Ascending aorta (tissue), 2 donors: ENCODE measurements at regions of chr2 and their contacts with region 1.

Region 1: DNA sequence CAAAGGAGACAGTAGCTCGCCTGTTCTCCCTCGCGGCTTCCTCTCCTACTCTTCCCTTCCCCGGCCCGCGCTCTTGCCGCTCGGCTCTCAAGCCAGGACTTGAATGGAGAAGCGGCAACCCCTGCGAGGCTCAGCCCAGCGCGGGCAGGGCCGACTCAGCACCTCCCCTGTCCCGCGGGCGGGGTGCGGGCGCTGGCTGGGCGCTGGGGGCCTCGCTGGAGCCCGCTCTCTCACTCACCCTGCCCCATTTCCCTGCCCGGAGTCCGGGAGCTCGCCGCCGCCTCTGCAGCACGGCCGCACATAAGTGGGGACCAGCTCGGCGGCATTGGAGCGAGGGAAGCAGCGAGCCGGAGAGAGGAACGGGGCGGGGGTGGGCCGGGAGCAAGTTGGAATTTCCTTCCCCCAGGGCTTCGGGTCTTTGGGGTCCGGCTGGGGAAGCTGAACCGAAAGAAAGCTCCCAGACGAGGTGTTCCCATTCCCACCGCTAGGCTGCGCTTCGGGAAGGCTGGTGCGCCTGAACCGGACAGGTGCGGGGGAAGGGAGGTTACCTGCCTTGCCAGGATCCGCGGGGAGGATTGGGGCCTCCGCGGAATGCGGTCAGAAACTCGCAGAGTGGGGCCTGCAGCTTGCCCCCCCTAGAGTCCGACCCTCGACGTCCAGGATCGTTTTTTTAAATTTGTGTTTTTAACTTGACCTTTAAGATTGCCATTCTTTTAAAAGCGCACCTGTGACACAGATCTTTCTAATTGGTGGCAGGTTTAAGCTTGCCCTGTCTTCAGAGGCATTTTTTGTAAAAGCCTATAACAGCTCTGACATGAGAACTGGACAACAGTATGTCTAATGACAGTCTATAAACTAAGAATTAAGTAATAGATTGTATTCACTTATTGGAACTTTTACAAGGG is at the start of gene COBLL1:
- DNase-seq: peak; percentile 16 to 85
- H3K4me3 ChIP-seq: peak within 1 kb of the TSS; percentile 69 to 98
- H3K27ac ChIP-seq: peak within 1 kb of the TSS; percentile 98 to 99
- H3K4me1 ChIP-seq: peaks cover 0 to 11% of the 10 kb centered on the region in 2 donors
- H3K27me3 ChIP-seq: no peaks in the 10 kb centered on the region
- CTCF ChIP-seq: peak; percentile 73 to 85 (median 76)
- total RNA-seq, gene COBLL1: 13.3 TPM

Region 2: DNA sequence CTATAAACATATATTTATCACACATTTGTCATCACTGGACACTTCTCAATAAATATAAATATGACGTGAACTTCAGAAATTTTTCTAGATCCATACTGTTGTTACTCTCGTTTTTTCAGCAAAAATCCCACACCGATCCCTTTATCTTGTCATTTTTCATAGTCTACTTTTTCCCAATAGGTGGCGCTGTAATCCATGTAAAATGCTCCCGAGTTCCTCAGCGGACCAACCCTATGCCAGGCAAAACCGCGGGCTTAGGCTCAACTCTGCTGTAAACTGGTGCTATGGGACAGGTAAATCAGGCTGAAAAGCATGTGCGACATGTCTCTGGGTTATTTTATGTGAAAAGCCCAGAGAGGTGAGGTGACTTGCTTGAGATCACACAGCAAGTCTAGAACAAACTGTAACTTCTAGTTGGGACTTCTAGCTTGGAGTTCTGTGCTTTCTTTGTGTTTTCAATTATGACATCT is 104.3 kb before region 1 on chr2:
- intact Hi-C with region 1: loop called (anchors 1 kb)
- DNase-seq: peak in 1 of 2 donors; percentile 76
- H3K4me3 ChIP-seq: peak overlapping the region in 1 of 2 donors; percentile 47
- H3K27ac ChIP-seq: no peak overlapping the region
- H3K4me1 ChIP-seq: peaks cover 4 to 17% of the 10 kb centered on the region in 2 donors
- H3K27me3 ChIP-seq: no peaks in the 10 kb centered on the region
- CTCF ChIP-seq: peak; percentile 63 to 81 (median 74)

Region 3: DNA sequence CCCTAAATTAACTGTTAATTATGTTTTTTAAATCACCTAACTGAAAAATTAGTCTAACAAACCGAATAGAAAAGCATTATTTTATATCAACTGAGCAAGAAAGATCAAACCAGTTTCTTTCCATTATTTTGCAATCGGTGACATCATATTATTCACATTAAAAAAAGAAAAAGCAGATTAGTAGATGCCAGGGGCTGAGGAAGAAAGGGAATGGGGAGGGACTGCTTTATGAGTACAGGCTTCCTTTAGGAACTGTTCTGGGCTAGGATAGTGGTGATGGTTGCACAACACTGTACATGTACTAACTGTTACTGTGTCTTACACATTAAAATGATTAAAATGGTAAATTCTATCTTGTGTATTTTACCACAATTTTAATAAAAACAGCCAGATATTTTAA is 59.6 kb before region 1 on chr2:
- intact Hi-C with region 1: loop called (anchors 1 kb)
- DNase-seq: peak in 1 of 2 donors; percentile 69
- H3K4me3 ChIP-seq: no peak overlapping the region
- H3K27ac ChIP-seq: peak overlapping the region; percentile 28 to 60
- H3K4me1 ChIP-seq: peaks cover 5 to 45% of the 10 kb centered on the region in 2 donors
- H3K27me3 ChIP-seq: no peaks in the 10 kb centered on the region
- CTCF ChIP-seq: no peak

Region 4: GRCh38 chr2:164808776-164809175 is 33.2 kb before region 1 on chr2:
- intact Hi-C with region 1: loop called (anchors 5 kb)
- DNase-seq: no peak
- H3K4me3 ChIP-seq: no peak overlapping the region
- H3K27ac ChIP-seq: peak overlapping the region; percentile 37 to 61
- H3K4me1 ChIP-seq: peaks cover 0 to 37% of the 10 kb centered on the region in 2 donors
- H3K27me3 ChIP-seq: no peaks in the 10 kb centered on the region
- CTCF ChIP-seq: no peak

Region 5: DNA sequence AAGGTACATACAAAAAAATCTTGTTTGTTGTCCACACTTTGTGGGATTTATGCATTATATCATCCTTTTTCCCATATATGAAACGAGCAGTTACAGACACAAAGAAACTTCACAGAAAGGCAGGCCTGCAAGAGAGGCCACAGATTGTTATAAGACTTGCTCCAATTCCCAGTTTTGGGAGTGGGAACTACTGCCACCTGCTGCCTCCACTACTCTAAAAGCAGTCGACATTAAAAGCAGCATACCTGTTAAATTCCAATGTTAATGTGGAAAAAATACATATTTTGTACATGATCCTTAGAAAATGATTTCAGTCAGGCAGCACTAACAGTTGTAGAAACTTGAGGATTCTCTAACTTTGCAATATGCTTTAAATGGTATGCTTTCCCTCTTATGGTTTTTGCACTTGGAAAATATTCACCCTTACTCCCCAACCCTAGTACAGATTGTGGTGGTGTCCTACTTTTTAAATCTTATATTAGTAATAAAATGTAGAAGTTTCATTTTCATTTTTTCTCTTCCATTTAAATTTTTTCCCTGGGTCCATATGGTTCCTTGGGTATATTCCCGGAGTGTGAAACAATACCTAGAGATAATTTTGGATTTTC is 75.4 kb after region 1 on chr2:
- intact Hi-C with region 1: loop called (anchors 2 kb)
- DNase-seq: peak in 1 of 2 donors; percentile 69
- H3K4me3 ChIP-seq: no peak overlapping the region
- H3K27ac ChIP-seq: no peak overlapping the region
- H3K4me1 ChIP-seq: peaks cover 0 to 4% of the 10 kb centered on the region in 2 donors
- H3K27me3 ChIP-seq: no peaks in the 10 kb centered on the region
- CTCF ChIP-seq: peak; percentile 29 to 65 (median 41)